ENCODE measurements at regions of chr22 and their contacts with region 1.

Region 1: GRCh38 chr22:32796865-32797573 is 4.5 kb upstream of the TIMP3 start:
- DNase-seq: peak in 4 of 5 donors; percentile 7 to 45 (median 10)
- H3K4me3 ChIP-seq: no peak overlapping the region
- H3K4me3 Mint-ChIP-seq: no peak overlapping the region
- H3K27ac ChIP-seq: no peak overlapping the region
- H3K27ac Mint-ChIP-seq: no peak overlapping the region
- H3K4me1 ChIP-seq: no peaks in the 10 kb centered on the region
- H3K4me1 Mint-ChIP-seq: peaks cover 0 to 5% (median 0%) of the 10 kb centered on the region in 3 donors
- H3K27me3 ChIP-seq: peaks cover 11% of the 10 kb centered on the region
- H3K27me3 Mint-ChIP-seq: peaks cover 16 to 43% of the 10 kb centered on the region in 2 donors

Region 2: GRCh38 chr22:32528984-32529982 is 267.7 kb before region 1 on chr22:
- CTCF ChIA-PET with region 1: interaction called, 10 read pairs
- POLR2A ChIA-PET with region 1: no interaction called
- DNase-seq: peak; percentile 19 to 63 (median 37)
- H3K4me3 ChIP-seq: no peak overlapping the region
- H3K4me3 Mint-ChIP-seq: no peak overlapping the region
- H3K27ac ChIP-seq: no peak overlapping the region
- H3K27ac Mint-ChIP-seq: no peak overlapping the region
- H3K4me1 ChIP-seq: no peaks in the 10 kb centered on the region
- H3K4me1 Mint-ChIP-seq: no peaks in the 10 kb centered on the region
- H3K27me3 ChIP-seq: no peaks in the 10 kb centered on the region
- H3K27me3 Mint-ChIP-seq: peaks cover 4 to 15% of the 10 kb centered on the region in 2 donors

Region 3: DNA sequence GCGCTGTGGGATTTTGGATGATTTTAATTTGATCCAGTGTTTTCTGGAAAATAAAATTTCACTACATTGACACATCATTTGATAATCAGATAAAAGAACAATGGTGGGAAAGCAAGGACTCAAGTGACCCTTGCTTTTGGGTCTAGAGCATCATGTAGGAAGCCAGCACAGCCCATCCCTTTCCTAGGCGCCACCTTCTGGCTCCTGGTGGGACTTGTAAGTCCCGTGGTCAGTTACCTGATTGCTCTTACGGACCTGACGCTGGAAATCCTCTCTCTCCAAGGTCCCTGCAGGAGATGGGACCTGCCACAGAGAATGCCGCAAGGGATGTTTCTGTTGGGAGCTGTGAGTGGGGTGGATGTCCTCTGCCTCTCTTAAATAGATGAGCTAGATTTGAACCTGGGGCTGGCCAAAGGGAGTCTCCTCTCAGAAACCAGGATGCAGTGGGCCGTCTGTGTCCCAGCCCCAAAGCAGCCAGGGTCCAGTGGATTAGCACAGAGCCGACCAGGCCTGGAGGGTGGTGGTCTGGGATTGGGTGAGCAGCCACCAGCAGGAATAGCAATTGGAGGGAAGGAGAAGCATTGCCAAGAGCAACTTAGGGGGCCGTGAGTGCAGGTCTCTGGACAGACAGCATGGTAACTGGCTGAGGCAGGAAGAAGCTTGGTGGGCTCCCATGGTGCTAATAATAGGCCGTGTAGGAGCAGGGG is 26.2 kb after region 1 on chr22:
- CTCF ChIA-PET with region 1: no interaction called
- POLR2A ChIA-PET with region 1: no interaction called
- DNase-seq: no peak
- H3K4me3 ChIP-seq: no peak overlapping the region
- H3K4me3 Mint-ChIP-seq: no peak overlapping the region
- H3K27ac ChIP-seq: no peak overlapping the region
- H3K27ac Mint-ChIP-seq: no peak overlapping the region
- H3K4me1 ChIP-seq: no peaks in the 10 kb centered on the region
- H3K4me1 Mint-ChIP-seq: no peaks in the 10 kb centered on the region
- H3K27me3 ChIP-seq: no peaks in the 10 kb centered on the region
- H3K27me3 Mint-ChIP-seq: peaks cover 5 to 18% of the 10 kb centered on the region in 2 donors

Measured in CD8-positive, alpha-beta memory T cell (primary cell).